Vagina (tissue), 2 donors: ENCODE measurements at regions of chr7 and their contacts with region 1.

Region 1: GRCh38 chr7:150898475-150899011 is 46.2 kb downstream of the AOC1 start:
- DNase-seq: no peak
- H3K4me3 ChIP-seq: no peak overlapping the region
- H3K27ac ChIP-seq: no peak overlapping the region
- H3K4me1 ChIP-seq: no peaks in the 10 kb centered on the region
- H3K27me3 ChIP-seq: no peaks in the 10 kb centered on the region
- CTCF ChIP-seq: peak; percentile 86 to 98 (median 95)
- POLR2A ChIP-seq: no peak

Region 2: GRCh38 chr7:150941981-150942590 is 43.5 kb after region 1 on chr7:
- intact Hi-C with region 1: no loop called
- DNase-seq: no peak
- H3K4me3 ChIP-seq: no peak overlapping the region
- H3K27ac ChIP-seq: no peak overlapping the region
- H3K4me1 ChIP-seq: peaks cover 10% of the 10 kb centered on the region
- H3K27me3 ChIP-seq: no peaks in the 10 kb centered on the region
- CTCF ChIP-seq: no peak
- POLR2A ChIP-seq: no peak

Region 3: GRCh38 chr7:150988230-150989226 is 90.0 kb after region 1 on chr7:
- intact Hi-C with region 1: loop called (anchors 5 kb)
- DNase-seq: no peak
- H3K4me3 ChIP-seq: peak overlapping the region in 1 of 2 donors; percentile 1
- H3K27ac ChIP-seq: no peak overlapping the region
- H3K4me1 ChIP-seq: peaks cover 19% of the 10 kb centered on the region
- H3K27me3 ChIP-seq: no peaks in the 10 kb centered on the region
- CTCF ChIP-seq: peak; percentile 56 to 82 (median 73)
- POLR2A ChIP-seq: no peak